ENCODE measurements at regions of chr7 and their contacts with region 1.

Region 1: GRCh38 chr7:92633211-92633906 is 43.2 kb upstream of the FAM133B start:
- DNase-seq: no peak
- H3K4me3 Mint-ChIP-seq: peak overlapping the region; percentile 43
- H3K27ac Mint-ChIP-seq: peak overlapping the region; percentile 96
- H3K4me1 Mint-ChIP-seq: peaks cover 70% of the 10 kb centered on the region
- H3K27me3 Mint-ChIP-seq: no peaks in the 10 kb centered on the region

Region 2: GRCh38 chr7:92669616-92670165 is 36.3 kb after region 1 on chr7:
- intact Hi-C with region 1: loop called (anchors 1 kb)
- DNase-seq: no peak
- H3K4me3 Mint-ChIP-seq: no peak overlapping the region
- H3K27ac Mint-ChIP-seq: peak overlapping the region; percentile 18
- H3K4me1 Mint-ChIP-seq: peaks cover 70% of the 10 kb centered on the region
- H3K27me3 Mint-ChIP-seq: no peaks in the 10 kb centered on the region

Region 3: GRCh38 chr7:92708111-92709042 is 75.0 kb after region 1 on chr7:
- intact Hi-C with region 1: loop called (anchors 1 kb)
- DNase-seq: no peak
- H3K4me3 Mint-ChIP-seq: no peak overlapping the region
- H3K27ac Mint-ChIP-seq: peak overlapping the region; percentile 64
- H3K4me1 Mint-ChIP-seq: peaks cover 43% of the 10 kb centered on the region
- H3K27me3 Mint-ChIP-seq: no peaks in the 10 kb centered on the region

Region 4: DNA sequence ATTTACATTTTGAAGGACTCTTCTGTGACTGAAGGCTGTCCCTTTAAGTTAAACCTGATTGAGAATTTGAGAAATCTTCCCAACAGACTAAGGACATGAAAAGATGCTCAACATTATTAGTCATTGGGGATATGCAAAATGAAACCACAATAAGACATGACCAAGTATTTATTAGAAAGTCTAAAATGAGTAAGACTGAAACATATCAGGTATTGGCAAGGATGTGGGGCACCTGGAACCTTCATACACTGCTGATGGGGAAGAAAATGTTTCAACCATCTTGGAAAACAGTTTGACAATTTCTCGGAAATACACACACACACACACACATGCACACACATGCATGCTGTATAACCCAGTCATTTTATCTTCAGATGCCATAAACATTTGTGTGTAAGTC is 335.1 kb after region 1 on chr7:
- intact Hi-C with region 1: no loop called
- DNase-seq: no peak
- H3K4me3 Mint-ChIP-seq: no peak overlapping the region
- H3K27ac Mint-ChIP-seq: no peak overlapping the region
- H3K4me1 Mint-ChIP-seq: peaks cover 7% of the 10 kb centered on the region
- H3K27me3 Mint-ChIP-seq: no peaks in the 10 kb centered on the region

Region 5: GRCh38 chr7:93036807-93037206 is 403.4 kb after region 1 on chr7:
- intact Hi-C with region 1: loop called (anchors 2 kb)
- DNase-seq: peak; percentile 33
- H3K4me3 Mint-ChIP-seq: no peak overlapping the region
- H3K27ac Mint-ChIP-seq: peak overlapping the region; percentile 39
- H3K4me1 Mint-ChIP-seq: peaks cover 16% of the 10 kb centered on the region
- H3K27me3 Mint-ChIP-seq: no peaks in the 10 kb centered on the region